Activated B cell treated with CpG ODN at 0.5 μM for 24 hours (primary cell): ENCODE measurements at regions of chr19 and their contacts with region 1.

Region 1: GRCh38 chr19:1599460-1599846 is 5.8 kb downstream of the UQCR11 start:
- DNase-seq: no peak
- ATAC-seq: no peak
- H3K4me3 Mint-ChIP-seq: no peak overlapping the region
- H3K27ac Mint-ChIP-seq: no peak overlapping the region
- H3K4me1 Mint-ChIP-seq: peaks cover 26% of the 10 kb centered on the region
- H3K27me3 Mint-ChIP-seq: no peaks in the 10 kb centered on the region
- CTCF ChIP-seq: no peak

Region 2: GRCh38 chr19:1610579-1610978 is 11.1 kb after region 1 on chr19:
- CTCF ChIA-PET with region 1: no interaction called
- POLR2A ChIA-PET with region 1: interaction called, 12 read pairs
- intact Hi-C with region 1: no loop called
- DNase-seq: no peak
- ATAC-seq: no peak
- H3K4me3 Mint-ChIP-seq: no peak overlapping the region
- H3K27ac Mint-ChIP-seq: no peak overlapping the region
- H3K4me1 Mint-ChIP-seq: peaks cover 30% of the 10 kb centered on the region
- H3K27me3 Mint-ChIP-seq: no peaks in the 10 kb centered on the region
- CTCF ChIP-seq: no peak